ENCODE measurements at regions of chr19 and their contacts with region 1.

Region 1: GRCh38 chr19:40684280-40684679 is 6.2 kb downstream of the NUMBL start:
- DNase-seq: no peak
- ATAC-seq: no peak
- H3K4me3 ChIP-seq: no peak overlapping the region
- H3K27ac ChIP-seq: no peak overlapping the region
- H3K4me1 ChIP-seq: no peaks in the 10 kb centered on the region
- H3K27me3 ChIP-seq: no peaks in the 10 kb centered on the region
- CTCF ChIP-seq: no peak

Region 2: GRCh38 chr19:40497214-40497613 is 187.1 kb before region 1 on chr19:
- CTCF ChIA-PET with region 1: no interaction called
- POLR2A ChIA-PET with region 1: no interaction called
- in situ Hi-C with region 1: no loop called
- intact Hi-C with region 1: no loop called
- DNase-seq: no peak
- ATAC-seq: no peak
- H3K4me3 ChIP-seq: no peak overlapping the region
- H3K27ac ChIP-seq: no peak overlapping the region
- H3K4me1 ChIP-seq: no peaks in the 10 kb centered on the region
- H3K27me3 ChIP-seq: no peaks in the 10 kb centered on the region
- CTCF ChIP-seq: no peak

Region 3: GRCh38 chr19:40592170-40592569 is 92.1 kb before region 1 on chr19:
- CTCF ChIA-PET with region 1: no interaction called
- POLR2A ChIA-PET with region 1: no interaction called
- in situ Hi-C with region 1: no loop called
- intact Hi-C with region 1: no loop called
- DNase-seq: no peak
- ATAC-seq: 0 out of 2 replicates have a peak, but pooled peaks have one; percentile 45
- H3K4me3 ChIP-seq: no peak overlapping the region
- H3K27ac ChIP-seq: no peak overlapping the region
- H3K4me1 ChIP-seq: peaks cover 6% of the 10 kb centered on the region; the same call in 1 of the 2 replicates
- H3K27me3 ChIP-seq: no peaks in the 10 kb centered on the region
- CTCF ChIP-seq: no peak

Region 4: GRCh38 chr19:40673397-40673796 is 10.9 kb before region 1 on chr19:
- CTCF ChIA-PET with region 1: interaction called, 10 read pairs
- POLR2A ChIA-PET with region 1: no interaction called
- in situ Hi-C with region 1: no loop called
- intact Hi-C with region 1: no loop called
- DNase-seq: no peak
- ATAC-seq: no peak
- H3K4me3 ChIP-seq: no peak overlapping the region
- H3K27ac ChIP-seq: no peak overlapping the region
- H3K4me1 ChIP-seq: no peaks in the 10 kb centered on the region
- H3K27me3 ChIP-seq: no peaks in the 10 kb centered on the region
- CTCF ChIP-seq: no peak

Measured in Panc1 (cell line).